T-cell (primary cell): ENCODE measurements at regions of chr6 and their contacts with region 1.

Region 1: DNA sequence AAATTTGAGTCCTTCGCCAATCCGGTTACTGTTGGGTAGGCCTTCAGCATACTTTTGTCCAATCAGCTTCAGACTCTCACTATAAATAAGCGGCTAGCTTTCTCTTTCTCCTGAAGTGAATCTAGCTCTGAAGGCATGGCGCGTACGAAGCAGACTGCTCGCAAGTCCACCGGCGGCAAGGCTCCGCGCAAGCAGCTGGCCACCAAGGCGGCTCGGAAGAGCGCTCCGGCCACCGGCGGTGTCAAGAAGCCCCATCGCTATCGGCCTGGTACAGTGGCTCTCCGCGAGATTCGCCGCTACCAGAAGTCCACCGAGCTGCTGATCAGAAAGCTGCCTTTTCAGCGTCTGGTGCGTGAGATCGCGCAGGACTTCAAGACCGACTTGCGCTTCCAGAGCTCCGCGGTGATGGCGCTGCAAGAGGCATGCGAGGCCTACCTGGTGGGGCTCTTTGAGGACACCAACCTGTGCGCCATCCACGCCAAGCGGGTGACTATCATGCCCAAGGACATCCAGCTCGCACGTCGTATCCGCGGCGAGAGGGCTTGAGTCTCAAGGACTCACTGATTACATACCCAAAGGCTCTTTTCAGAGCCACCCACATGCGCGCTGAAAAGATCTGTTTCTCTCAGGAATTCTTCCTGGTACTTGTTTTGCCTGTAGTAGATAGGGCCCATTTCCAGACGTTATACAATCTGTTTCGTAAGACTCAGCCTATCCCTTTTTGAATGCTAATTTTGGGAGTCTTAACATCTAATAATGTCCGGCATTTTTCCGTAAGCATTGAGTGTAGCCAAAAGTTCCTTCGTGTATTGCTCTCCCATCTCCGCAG is 102.0 kb downstream of the OR2B2 start:
- DNase-seq: peak; percentile 60 to 94 (median 73)
- ATAC-seq: peak; percentile 61 to 66 (median 62)
- H3K4me3 ChIP-seq: peak overlapping the region; percentile 62 to 68
- H3K4me3 Mint-ChIP-seq: peak overlapping the region; percentile 87 to 94 (median 90)
- H3K27ac ChIP-seq: peak overlapping the region; percentile 81
- H3K27ac Mint-ChIP-seq: peak overlapping the region; percentile 95 to 98
- H3K4me1 ChIP-seq: peaks cover 38% of the 10 kb centered on the region in 2 experiments
- H3K4me1 Mint-ChIP-seq: peaks cover 48 to 61% (median 52%) of the 10 kb centered on the region in 3 donors
- H3K27me3 ChIP-seq: no peaks in the 10 kb centered on the region
- H3K27me3 Mint-ChIP-seq: no peaks in the 10 kb centered on the region

Region 2: GRCh38 chr6:27132532-27133280 is 677.4 kb before region 1 on chr6:
- CTCF ChIA-PET with region 1: interaction called in 1 of 2 experiments, 4 read pairs
- POLR2A ChIA-PET with region 1: interaction called in 1 of 2 experiments, 18 read pairs
- DNase-seq: peak; percentile 76 to 98 (median 87)
- ATAC-seq: peak; percentile 80 to 87 (median 86)
- H3K4me3 ChIP-seq: peak overlapping the region; percentile 49 to 77
- H3K4me3 Mint-ChIP-seq: no peak overlapping the region
- H3K27ac ChIP-seq: peak overlapping the region; percentile 85
- H3K27ac Mint-ChIP-seq: no peak overlapping the region
- H3K4me1 ChIP-seq: peaks cover 17 to 34% of the 10 kb centered on the region in 2 experiments
- H3K4me1 Mint-ChIP-seq: peaks cover 22 to 30% (median 22%) of the 10 kb centered on the region in 3 donors
- H3K27me3 ChIP-seq: no peaks in the 10 kb centered on the region
- H3K27me3 Mint-ChIP-seq: no peaks in the 10 kb centered on the region

Region 3: DNA sequence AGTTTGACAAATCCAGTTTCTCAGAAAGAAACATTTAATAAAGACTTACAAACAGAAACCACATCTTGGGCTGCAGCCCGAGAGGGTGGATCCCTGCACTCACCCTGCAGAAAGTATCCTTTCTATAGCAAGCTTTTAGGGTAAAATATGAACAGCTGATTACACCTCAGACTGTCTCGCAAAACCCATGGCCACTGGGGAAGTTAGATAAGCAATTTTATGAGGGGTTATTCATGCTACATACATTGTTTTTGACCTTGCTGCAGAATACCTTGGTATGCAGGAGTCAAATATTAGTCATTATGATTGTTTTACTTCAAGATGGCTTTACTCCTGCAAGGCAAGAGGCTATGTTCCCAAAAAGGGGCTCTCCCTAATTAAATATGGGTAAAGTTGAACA is 24.9 kb before region 1 on chr6:
- CTCF ChIA-PET with region 1: no interaction called
- POLR2A ChIA-PET with region 1: no interaction called
- DNase-seq: no peak
- ATAC-seq: no peak
- H3K4me3 ChIP-seq: no peak overlapping the region
- H3K4me3 Mint-ChIP-seq: no peak overlapping the region
- H3K27ac ChIP-seq: no peak overlapping the region
- H3K27ac Mint-ChIP-seq: no peak overlapping the region
- H3K4me1 ChIP-seq: no peaks in the 10 kb centered on the region
- H3K4me1 Mint-ChIP-seq: no peaks in the 10 kb centered on the region
- H3K27me3 ChIP-seq: peaks cover 0 to 21% of the 10 kb centered on the region in 2 experiments
- H3K27me3 Mint-ChIP-seq: peaks cover 25 to 26% of the 10 kb centered on the region in 2 donors

Region 4: DNA sequence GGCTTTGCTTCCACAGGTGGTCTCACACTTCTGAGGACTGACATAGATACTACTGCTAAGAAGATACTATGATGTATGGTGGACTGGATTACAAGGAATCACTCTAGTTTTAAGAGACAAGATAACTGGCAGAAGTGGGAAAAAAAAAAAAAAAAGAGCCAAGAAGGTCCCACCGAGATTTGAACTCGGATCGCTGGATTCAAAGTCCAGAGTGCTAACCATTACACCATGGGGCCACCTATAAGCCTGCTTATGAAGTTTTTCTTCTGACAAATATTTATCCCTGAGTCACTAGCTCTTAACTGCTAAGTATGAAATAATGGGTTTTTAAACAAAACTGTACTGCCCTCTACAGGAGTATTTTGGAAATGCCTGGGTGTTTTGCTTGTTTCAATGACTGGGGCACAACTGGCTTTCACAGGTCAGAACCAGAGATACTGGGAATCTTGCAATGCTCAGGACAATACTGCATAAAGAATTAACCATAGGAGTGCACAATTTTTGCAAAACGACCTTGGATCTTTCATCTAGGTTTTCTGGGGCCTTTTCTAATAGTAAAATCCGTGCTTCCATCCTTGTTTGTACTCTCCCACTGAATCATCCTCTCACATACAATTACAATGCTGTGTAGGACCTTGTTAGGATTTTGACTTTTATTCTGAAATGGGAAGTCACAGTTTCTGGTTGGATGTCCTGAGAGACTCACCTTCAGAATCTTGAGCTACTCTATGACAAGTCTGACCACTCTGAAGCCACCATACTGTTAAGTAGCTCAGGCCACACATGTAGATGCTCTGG is 14.3 kb before region 1 on chr6:
- CTCF ChIA-PET with region 1: interaction called in 1 of 2 experiments, 29 read pairs
- POLR2A ChIA-PET with region 1: interaction called in 1 of 2 experiments, 6 read pairs
- DNase-seq: peak in 19 of 35 experiments; percentile 5 to 88 (median 41)
- ATAC-seq: peak; percentile 48 to 66 (median 57)
- H3K4me3 ChIP-seq: no peak overlapping the region
- H3K4me3 Mint-ChIP-seq: no peak overlapping the region
- H3K27ac ChIP-seq: no peak overlapping the region
- H3K27ac Mint-ChIP-seq: peak overlapping the region; percentile 17 to 22
- H3K4me1 ChIP-seq: peaks cover 11 to 20% of the 10 kb centered on the region in 2 experiments
- H3K4me1 Mint-ChIP-seq: peaks cover 23 to 26% (median 23%) of the 10 kb centered on the region in 3 donors
- H3K27me3 ChIP-seq: peaks cover 0 to 9% of the 10 kb centered on the region in 2 experiments
- H3K27me3 Mint-ChIP-seq: peaks cover 5 to 9% of the 10 kb centered on the region in 2 donors

Region 5: GRCh38 chr6:27838058-27838944 is 28.1 kb after region 1 on chr6:
- CTCF ChIA-PET with region 1: interaction called in 1 of 2 experiments, 47 read pairs
- POLR2A ChIA-PET with region 1: interaction called, 29 to 192 read pairs
- DNase-seq: peak; percentile 62 to 97 (median 79)
- ATAC-seq: peak; percentile 80 to 83 (median 82)
- H3K4me3 ChIP-seq: peak overlapping the region; percentile 86 to 87
- H3K4me3 Mint-ChIP-seq: no peak overlapping the region
- H3K27ac ChIP-seq: peak overlapping the region; percentile 99
- H3K27ac Mint-ChIP-seq: no peak overlapping the region
- H3K4me1 ChIP-seq: peaks cover 14 to 28% of the 10 kb centered on the region in 2 experiments
- H3K4me1 Mint-ChIP-seq: peaks cover 9 to 20% (median 9%) of the 10 kb centered on the region in 3 donors
- H3K27me3 ChIP-seq: peaks cover 0 to 8% of the 10 kb centered on the region in 2 experiments
- H3K27me3 Mint-ChIP-seq: peaks cover 4 to 7% of the 10 kb centered on the region in 2 donors

Region 6: GRCh38 chr6:27871924-27872638 is 61.9 kb after region 1 on chr6:
- CTCF ChIA-PET with region 1: interaction called in 1 of 2 experiments, 22 read pairs
- POLR2A ChIA-PET with region 1: interaction called, 30 to 117 read pairs
- DNase-seq: peak; percentile 70 to 96 (median 84)
- ATAC-seq: peak; percentile 79 to 82 (median 80)
- H3K4me3 ChIP-seq: peak overlapping the region; percentile 65 to 80
- H3K4me3 Mint-ChIP-seq: peak overlapping the region; percentile 83 to 87 (median 84)
- H3K27ac ChIP-seq: peak overlapping the region; percentile 92
- H3K27ac Mint-ChIP-seq: peak overlapping the region; percentile 93 to 96
- H3K4me1 ChIP-seq: peaks cover 16 to 34% of the 10 kb centered on the region in 2 experiments
- H3K4me1 Mint-ChIP-seq: peaks cover 38 to 47% (median 42%) of the 10 kb centered on the region in 3 donors
- H3K27me3 ChIP-seq: no peaks in the 10 kb centered on the region
- H3K27me3 Mint-ChIP-seq: no peaks in the 10 kb centered on the region